GM12878 (cell line): ENCODE measurements at regions of chr15 and their contacts with region 1.

Region 1: DNA sequence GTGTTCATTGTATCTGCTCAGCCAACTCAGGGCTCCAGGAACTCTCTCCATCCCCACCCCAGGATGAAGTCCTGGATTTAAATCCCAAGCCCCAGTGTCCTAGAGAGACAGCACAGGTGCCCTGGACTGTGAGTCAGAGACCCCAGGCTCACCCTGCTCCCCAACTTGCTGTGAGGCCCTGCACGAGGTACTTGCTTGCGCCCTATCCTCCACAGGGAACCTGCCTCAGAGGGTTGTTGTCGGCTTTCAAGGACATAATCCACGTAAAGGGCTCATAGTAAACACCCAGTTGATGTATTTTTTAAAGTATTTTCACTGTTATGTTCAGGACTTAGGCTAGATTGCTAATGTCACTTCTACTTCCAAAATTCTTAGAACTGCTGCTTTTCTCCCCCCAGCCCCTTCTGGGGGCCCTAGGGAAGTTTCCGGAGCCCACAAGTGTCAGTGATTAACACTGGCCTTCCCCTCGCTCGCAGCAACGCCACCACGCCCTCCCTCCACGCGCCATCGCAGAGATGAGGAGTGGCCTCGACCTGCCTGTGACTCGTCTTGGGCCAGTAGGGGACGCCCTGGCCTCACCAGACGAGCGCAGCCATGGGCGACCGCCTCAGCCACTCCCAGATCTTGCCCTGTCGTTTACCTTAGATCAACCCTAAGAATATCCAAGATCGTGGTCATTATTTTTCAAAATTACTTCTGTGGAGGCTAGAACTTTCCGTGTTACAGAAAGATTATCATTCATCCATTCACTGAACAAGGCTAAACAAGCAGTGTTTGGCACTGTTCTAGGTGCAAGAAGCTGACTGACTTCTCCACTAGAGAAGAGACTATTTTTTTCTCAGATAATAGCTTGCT is 6.0 kb upstream of the SRP14 start:
- DNase-seq: no peak
- ATAC-seq: peak; percentile 86
- H3K4me3 ChIP-seq: no peak overlapping the region
- H3K27ac ChIP-seq: peak overlapping the region; percentile 92
- H3K4me1 ChIP-seq: peaks cover 67% of the 10 kb centered on the region
- H3K27me3 ChIP-seq: no peaks in the 10 kb centered on the region
- CTCF ChIP-seq: peak; percentile 97 to 100 (median 98); a peak in 5 of 6 replicates
- EP300 ChIP-seq: peak in 1 of 2 experiments; percentile 26; a peak in 1 of 4 replicates
- POLR2A ChIP-seq: no peak
- RAD21 ChIP-seq: peak; percentile 93

Region 2: GRCh38 chr15:40064221-40064894 is 19.4 kb after region 1 on chr15:
- CTCF ChIA-PET with region 1: interaction called, 27 read pairs
- POLR2A ChIA-PET with region 1: interaction called, 17 read pairs
- RAD21 ChIA-PET with region 1: interaction called, 151 read pairs
- SMC1A ChIA-PET with region 1: interaction called, 64 read pairs
- in situ Hi-C with region 1: no loop called
- intact Hi-C with region 1: loop called (anchors 2 kb)
- DNase-seq: no peak
- ATAC-seq: peak; percentile 59
- H3K4me3 ChIP-seq: peak overlapping the region; percentile 31; the same call in 1 of the 2 replicates
- H3K27ac ChIP-seq: peak overlapping the region; percentile 96
- H3K4me1 ChIP-seq: peaks cover 75% of the 10 kb centered on the region
- H3K27me3 ChIP-seq: no peaks in the 10 kb centered on the region
- CTCF ChIP-seq: no peak
- EP300 ChIP-seq: peak; percentile 37 to 51; a peak in 1 of 4 replicates
- POLR2A ChIP-seq: no peak; the same call in 1 of the 2 replicates
- RAD21 ChIP-seq: no peak; the same call in 1 of the 2 replicates

Region 3: GRCh38 chr15:40087991-40088928 is 43.3 kb after region 1 on chr15:
- CTCF ChIA-PET with region 1: interaction called, 776 read pairs
- POLR2A ChIA-PET with region 1: interaction called, 3 read pairs
- RAD21 ChIA-PET with region 1: interaction called, 903 read pairs
- SMC1A ChIA-PET with region 1: interaction called, 1,082 read pairs
- in situ Hi-C with region 1: no loop called
- intact Hi-C with region 1: no loop called
- DNase-seq: no peak
- ATAC-seq: no peak; the same call in 2 of the 3 replicates
- H3K4me3 ChIP-seq: no peak overlapping the region
- H3K27ac ChIP-seq: no peak overlapping the region
- H3K4me1 ChIP-seq: peaks cover 12% of the 10 kb centered on the region
- H3K27me3 ChIP-seq: no peaks in the 10 kb centered on the region
- CTCF ChIP-seq: no peak
- EP300 ChIP-seq: no peak
- POLR2A ChIP-seq: peak; percentile 56; the same call in 1 of the 2 replicates
- RAD21 ChIP-seq: no peak

Region 4: DNA sequence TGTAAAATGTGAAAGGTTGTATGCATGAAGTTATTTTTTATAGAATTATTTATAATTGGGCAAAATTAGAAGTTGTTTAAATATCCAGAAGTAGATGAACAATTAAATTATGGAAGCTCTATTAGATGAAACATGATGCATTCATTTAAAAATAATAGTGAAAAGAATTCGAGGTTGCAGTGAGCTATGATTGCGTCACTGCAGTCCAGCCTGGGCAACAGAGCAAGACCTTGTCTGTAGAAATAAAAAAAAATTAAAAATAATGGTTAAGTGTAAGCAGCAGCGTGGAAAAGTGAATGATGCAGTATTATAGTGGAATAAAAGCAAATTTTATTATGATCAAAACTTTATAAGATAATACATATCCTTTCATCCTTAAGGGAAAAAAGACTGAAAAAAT is 130.2 kb after region 1 on chr15:
- CTCF ChIA-PET with region 1: interaction called, 11 read pairs
- POLR2A ChIA-PET with region 1: interaction called, 6 read pairs
- RAD21 ChIA-PET with region 1: interaction called, 8 read pairs
- SMC1A ChIA-PET with region 1: interaction called, 14 read pairs
- in situ Hi-C with region 1: no loop called
- intact Hi-C with region 1: loop called (anchors 5 kb)
- DNase-seq: no peak
- ATAC-seq: no peak
- H3K4me3 ChIP-seq: no peak overlapping the region
- H3K27ac ChIP-seq: no peak overlapping the region
- H3K4me1 ChIP-seq: no peaks in the 10 kb centered on the region
- H3K27me3 ChIP-seq: no peaks in the 10 kb centered on the region
- CTCF ChIP-seq: no peak
- EP300 ChIP-seq: no peak
- POLR2A ChIP-seq: no peak
- RAD21 ChIP-seq: no peak

Region 5: DNA sequence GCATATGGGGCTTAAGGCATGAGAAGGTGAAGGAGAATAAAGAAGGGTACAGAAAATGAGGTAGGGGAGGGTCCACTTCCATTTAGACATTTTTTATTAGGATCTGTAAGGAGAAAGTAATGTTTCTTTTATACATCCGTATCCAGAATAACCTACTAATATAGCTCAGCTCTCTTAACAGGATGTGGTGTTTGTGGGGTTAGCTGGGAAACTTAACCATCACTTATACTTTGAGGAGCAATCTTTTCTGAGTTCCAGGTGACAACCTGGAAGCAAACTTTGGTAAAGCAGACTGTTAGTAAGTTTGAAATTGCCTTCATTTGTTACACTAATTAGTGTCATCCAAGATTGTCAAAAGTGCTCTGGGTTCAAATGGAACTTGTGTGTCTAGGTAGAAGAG is 152.5 kb after region 1 on chr15:
- CTCF ChIA-PET with region 1: interaction called, 15 read pairs
- POLR2A ChIA-PET with region 1: no interaction called
- RAD21 ChIA-PET with region 1: interaction called, 9 read pairs
- SMC1A ChIA-PET with region 1: interaction called, 10 read pairs
- in situ Hi-C with region 1: loop called (anchors 10 kb)
- intact Hi-C with region 1: no loop called
- DNase-seq: no peak
- ATAC-seq: no peak
- H3K4me3 ChIP-seq: no peak overlapping the region
- H3K27ac ChIP-seq: no peak overlapping the region
- H3K4me1 ChIP-seq: no peaks in the 10 kb centered on the region
- H3K27me3 ChIP-seq: no peaks in the 10 kb centered on the region
- CTCF ChIP-seq: no peak
- EP300 ChIP-seq: no peak
- POLR2A ChIP-seq: no peak
- RAD21 ChIP-seq: no peak

Region 6: GRCh38 chr15:40274350-40275274 is 229.7 kb after region 1 on chr15:
- CTCF ChIA-PET with region 1: interaction called, 144 read pairs
- POLR2A ChIA-PET with region 1: interaction called, 3 read pairs
- RAD21 ChIA-PET with region 1: interaction called, 58 read pairs
- SMC1A ChIA-PET with region 1: interaction called, 55 read pairs
- in situ Hi-C with region 1: loop called (anchors 5 kb)
- intact Hi-C with region 1: loop called (anchors 1 kb)
- DNase-seq: peak; percentile 19
- ATAC-seq: peak; percentile 78
- H3K4me3 ChIP-seq: no peak overlapping the region
- H3K27ac ChIP-seq: no peak overlapping the region
- H3K4me1 ChIP-seq: peaks cover 6% of the 10 kb centered on the region
- H3K27me3 ChIP-seq: 0 out of 4 replicates have a peak, but pooled peaks cover 0 to 2% of the 10 kb centered on the region in 2 experiments
- CTCF ChIP-seq: peak; percentile 100; a peak in 5 of 6 replicates
- EP300 ChIP-seq: no peak
- POLR2A ChIP-seq: no peak
- RAD21 ChIP-seq: peak; percentile 98